PC-9 (cell line): ENCODE measurements at regions of chr20 and their contacts with region 1.

Region 1: DNA sequence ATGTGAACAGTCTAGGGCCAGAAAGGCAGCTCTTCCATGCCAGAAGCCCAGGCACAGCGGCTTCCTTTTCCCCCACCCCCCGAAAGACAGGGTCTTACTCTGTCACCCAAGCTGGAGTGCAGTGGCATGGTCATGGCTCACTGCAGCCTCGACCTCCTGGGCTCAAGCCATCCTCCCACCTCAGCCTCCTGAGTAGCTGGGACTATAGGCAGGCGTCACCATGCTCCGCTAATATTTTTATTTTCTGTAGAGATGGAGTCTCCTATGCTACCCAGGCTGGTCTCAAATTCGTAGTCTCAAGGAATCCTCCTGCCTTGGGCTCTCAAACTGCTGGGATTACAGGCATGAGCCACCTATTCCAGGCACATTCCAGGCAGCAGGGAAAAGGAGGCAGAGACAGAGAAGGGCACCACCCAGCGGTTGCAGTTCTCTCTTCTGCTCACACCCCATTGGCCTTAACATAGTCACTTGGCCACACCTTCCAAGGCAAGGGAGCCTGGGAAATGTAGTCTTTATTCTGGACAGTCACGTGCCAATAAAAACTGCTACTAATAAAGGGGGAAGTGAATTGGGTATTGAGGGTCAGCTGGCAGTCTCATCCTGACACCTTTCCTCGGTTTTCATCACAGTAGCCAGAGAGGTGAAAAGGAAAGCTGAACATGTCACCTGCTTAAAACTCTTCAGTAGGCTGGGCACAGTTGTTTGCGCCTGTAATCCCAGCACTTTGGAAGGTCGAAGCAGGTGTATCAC is 205.9 kb downstream of the ZMYND8 start:
- DNase-seq: peak; percentile 68 to 69
- H3K4me3 ChIP-seq: no peak overlapping the region
- H3K27ac ChIP-seq: no peak overlapping the region
- H3K4me1 ChIP-seq: peaks cover 18% of the 10 kb centered on the region
- H3K27me3 ChIP-seq: no peaks in the 10 kb centered on the region
- CTCF ChIP-seq: peak; percentile 86

Region 2: DNA sequence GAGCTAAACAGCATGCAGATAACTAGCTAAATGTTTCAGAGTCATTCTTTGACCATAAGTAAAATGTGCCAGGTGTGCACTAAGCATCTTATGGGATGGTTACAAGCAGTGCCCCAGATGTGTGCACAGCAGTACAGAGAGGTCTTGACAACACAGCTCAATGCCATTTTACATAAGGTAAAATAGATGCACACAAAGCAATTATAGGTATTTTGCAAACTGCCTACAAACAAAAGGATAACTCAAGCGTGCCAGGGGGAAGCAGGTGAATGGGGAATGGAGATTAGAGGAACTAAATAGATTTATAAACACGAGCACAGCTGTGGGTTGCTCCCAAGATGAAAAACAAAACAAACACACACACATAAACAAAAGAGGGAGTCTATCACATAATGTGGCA is 376.3 kb before region 1 on chr20:
- CTCF ChIA-PET with region 1: no interaction called
- POLR2A ChIA-PET with region 1: no interaction called
- intact Hi-C with region 1: no loop called
- DNase-seq: no peak
- H3K4me3 ChIP-seq: no peak overlapping the region
- H3K27ac ChIP-seq: no peak overlapping the region
- H3K4me1 ChIP-seq: 0 out of 2 replicates have a peak, but pooled peaks cover 6% of the 10 kb centered on the region
- H3K27me3 ChIP-seq: no peaks in the 10 kb centered on the region
- CTCF ChIP-seq: no peak

Region 3: DNA sequence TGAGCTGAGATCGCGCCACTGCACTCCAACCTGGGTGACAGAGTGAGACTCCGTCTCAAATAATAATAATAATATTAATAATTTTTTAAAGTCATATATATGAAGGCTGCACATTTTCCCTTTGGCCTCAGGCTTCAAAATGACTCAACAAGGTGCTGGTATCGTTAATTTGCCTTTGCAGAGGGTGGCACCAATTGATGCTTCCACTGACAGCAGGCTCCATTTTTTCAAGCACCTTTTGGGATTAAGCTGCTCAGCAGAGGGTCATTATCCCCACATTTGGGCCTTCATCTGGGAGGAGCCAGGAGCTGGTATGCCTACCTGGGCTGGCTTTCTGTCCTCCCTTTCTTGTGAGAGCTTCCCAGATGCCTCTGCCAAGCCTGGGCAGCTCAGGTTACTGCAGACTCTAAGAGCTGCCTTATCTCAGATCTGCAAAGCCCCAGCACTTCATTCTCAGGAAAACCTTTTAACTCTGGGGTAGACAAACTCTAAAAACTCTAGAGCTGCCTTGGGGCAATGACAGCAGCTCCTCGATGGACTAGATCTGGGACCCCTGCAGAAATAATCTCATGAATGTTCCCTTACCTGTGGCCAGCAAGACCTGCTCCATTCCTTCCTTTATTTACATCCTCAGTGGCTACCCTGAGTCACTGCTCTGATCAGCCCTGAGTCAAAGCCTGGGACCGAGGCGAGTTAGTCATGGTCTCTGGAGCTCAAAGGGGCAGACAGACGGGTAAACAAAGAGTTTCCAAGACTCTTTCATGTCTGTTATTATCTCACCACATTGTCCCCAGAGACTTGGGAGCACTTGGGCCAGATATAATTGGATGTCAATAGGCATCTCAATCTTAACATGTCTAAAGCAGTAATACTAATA is 336.0 kb before region 1 on chr20:
- CTCF ChIA-PET with region 1: no interaction called
- POLR2A ChIA-PET with region 1: no interaction called
- intact Hi-C with region 1: loop called (anchors 10 kb)
- DNase-seq: peak; percentile 83 to 97
- H3K4me3 ChIP-seq: peak overlapping the region; percentile 31; the same call in 1 of the 2 replicates
- H3K27ac ChIP-seq: peak overlapping the region; percentile 69
- H3K4me1 ChIP-seq: peaks cover 31% of the 10 kb centered on the region
- H3K27me3 ChIP-seq: no peaks in the 10 kb centered on the region
- CTCF ChIP-seq: no peak

Region 4: DNA sequence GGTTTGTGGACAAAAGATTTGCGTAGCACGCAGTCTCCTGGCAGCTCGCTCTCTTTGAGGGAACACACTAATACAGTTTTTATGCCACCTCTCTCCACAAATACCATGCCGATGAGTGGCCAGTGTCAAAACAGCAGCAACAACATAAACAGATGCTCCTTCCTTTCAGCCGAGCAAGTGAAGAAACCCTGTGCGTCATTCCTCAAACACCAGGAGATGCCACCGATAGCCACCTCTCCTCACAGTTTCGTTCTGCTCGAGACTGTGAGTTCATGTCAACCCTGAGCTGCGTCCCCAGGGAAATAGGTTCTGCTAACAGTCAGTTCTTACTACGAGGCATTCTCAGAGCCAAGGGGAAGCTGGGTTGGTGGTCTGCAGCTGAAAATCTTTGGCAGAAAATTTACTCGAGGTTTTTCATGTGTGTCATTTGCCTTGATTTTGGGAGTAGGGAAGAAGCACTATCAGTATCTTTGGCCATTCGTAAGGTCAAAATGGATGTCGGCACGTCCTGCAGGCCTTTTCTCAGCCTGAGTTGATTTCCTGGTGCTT is 196.0 kb before region 1 on chr20:
- CTCF ChIA-PET with region 1: interaction called, 7 read pairs
- POLR2A ChIA-PET with region 1: no interaction called
- intact Hi-C with region 1: loop called (anchors 2 kb)
- DNase-seq: peak; percentile 80 to 100
- H3K4me3 ChIP-seq: peak overlapping the region; percentile 33; the same call in 1 of the 2 replicates
- H3K27ac ChIP-seq: peak overlapping the region; percentile 87
- H3K4me1 ChIP-seq: peaks cover 41% of the 10 kb centered on the region
- H3K27me3 ChIP-seq: no peaks in the 10 kb centered on the region
- CTCF ChIP-seq: no peak

Region 5: DNA sequence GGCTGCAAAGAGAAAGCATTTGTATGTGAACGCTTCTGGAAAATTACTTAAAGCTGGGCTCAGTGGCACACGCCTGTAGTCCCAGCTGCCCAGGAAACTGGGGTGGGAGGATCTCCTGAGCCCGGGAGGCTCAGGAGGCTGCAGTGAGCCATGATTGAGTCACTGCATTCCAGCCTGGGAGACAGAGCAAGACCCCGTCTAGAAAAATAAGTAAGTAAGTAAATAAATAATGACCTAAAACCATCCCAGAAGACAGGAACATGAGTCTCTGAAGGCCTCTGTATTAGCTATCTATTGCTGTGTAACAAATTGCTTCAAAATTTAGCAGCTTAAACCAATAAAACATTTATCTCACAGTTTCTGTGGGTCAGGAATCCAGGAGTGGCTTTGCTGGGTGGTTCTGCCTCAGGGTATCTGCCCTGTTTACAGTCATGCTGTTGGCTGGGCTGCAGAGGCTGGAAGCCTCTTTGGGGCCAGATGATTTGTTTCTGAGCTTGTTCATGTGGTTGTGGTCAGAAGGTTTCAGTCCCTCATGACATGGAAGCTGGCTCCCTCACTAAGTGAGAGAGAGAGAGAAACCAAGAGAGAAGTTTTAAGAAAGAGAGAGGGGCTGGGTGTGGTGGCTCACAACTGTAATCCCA is 302.7 kb after region 1 on chr20:
- CTCF ChIA-PET with region 1: no interaction called
- POLR2A ChIA-PET with region 1: no interaction called
- intact Hi-C with region 1: no loop called
- DNase-seq: peak; percentile 52 to 92
- H3K4me3 ChIP-seq: peak overlapping the region; percentile 10; the same call in 1 of the 2 replicates
- H3K27ac ChIP-seq: peak overlapping the region; percentile 93
- H3K4me1 ChIP-seq: peaks cover 66% of the 10 kb centered on the region
- H3K27me3 ChIP-seq: no peaks in the 10 kb centered on the region
- CTCF ChIP-seq: no peak